ENCODE measurements at regions of chr3 and their contacts with region 1.

Region 1: GRCh38 chr3:112908252-112908651 is 61.6 kb upstream of the CD200R1L start:
- DNase-seq: no peak
- CTCF ChIP-seq: no peak

Region 2: DNA sequence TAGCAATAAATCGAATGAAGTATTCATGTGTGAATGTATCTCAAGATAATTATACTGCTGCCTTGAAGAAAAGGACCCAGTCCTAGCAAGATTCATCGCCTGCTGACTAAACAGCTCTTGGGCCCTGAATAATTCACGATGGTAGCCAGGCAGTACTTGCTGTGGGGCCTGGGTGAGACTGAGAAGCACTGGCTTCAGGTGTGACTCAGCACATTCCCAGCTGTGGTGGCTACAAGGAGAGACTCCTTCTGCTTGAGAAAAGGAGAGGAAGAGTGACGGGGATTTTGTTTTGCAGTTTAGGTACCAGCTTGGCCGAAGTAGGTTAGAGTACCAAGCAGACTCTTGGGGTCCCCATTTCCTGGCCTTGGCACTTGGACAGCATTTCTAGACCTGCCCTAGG is 14.0 kb before region 1 on chr3:
- CTCF ChIA-PET with region 1: interaction called, 10 read pairs
- POLR2A ChIA-PET with region 1: no interaction called
- DNase-seq: no peak
- CTCF ChIP-seq: no peak

Region 3: DNA sequence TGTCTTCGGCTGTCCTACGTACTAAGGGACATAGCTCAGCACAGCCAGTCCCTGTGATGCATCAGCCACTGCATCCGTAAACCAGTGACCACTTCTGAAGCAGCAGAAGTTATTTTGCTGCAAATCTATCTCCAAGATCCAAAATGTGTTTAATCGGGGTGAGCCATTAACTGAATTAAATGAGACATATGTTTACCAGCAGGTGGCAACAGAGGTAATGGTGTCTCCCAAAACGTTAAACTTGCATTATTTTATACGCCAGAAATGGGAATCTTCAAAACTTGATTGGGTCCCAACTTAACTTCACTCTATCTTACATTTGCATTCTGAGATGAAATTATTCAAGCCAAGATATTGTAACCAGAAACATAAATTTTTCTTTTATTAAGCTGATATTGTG is 227.8 kb after region 1 on chr3:
- CTCF ChIA-PET with region 1: no interaction called
- POLR2A ChIA-PET with region 1: no interaction called
- DNase-seq: no peak
- CTCF ChIP-seq: peak; percentile 24

Measured in GM10248 (cell line).